Pancreas (tissue), 10 donors: ENCODE measurements at regions of chr7 and their contacts with region 1.

Region 1: GRCh38 chr7:64618785-64619456 is 47.0 kb upstream of the ZNF107 start:
- DNase-seq: peak in 1 of 6 donors; percentile 21
- ATAC-seq: peak in 2 of 4 donors; percentile 47 to 75
- H3K4me3 ChIP-seq: no peak overlapping the region
- H3K27ac ChIP-seq: no peak overlapping the region
- H3K4me1 ChIP-seq: no peaks in the 10 kb centered on the region
- H3K27me3 ChIP-seq: no peaks in the 10 kb centered on the region
- CTCF ChIP-seq: peak in 2 of 4 donors; percentile 21 to 44

Region 2: GRCh38 chr7:64174945-64175344 is 444.0 kb before region 1 on chr7:
- intact Hi-C with region 1: loop called in 1 of 3 experiments (anchors 5 kb)
- DNase-seq: no peak
- ATAC-seq: no peak
- H3K4me3 ChIP-seq: no peak overlapping the region
- H3K27ac ChIP-seq: no peak overlapping the region
- H3K4me1 ChIP-seq: no peaks in the 10 kb centered on the region
- H3K27me3 ChIP-seq: no peaks in the 10 kb centered on the region
- CTCF ChIP-seq: no peak

Region 3: GRCh38 chr7:64183126-64183742 is 435.7 kb before region 1 on chr7:
- intact Hi-C with region 1: loop called in 1 of 3 experiments (anchors 5 kb)
- DNase-seq: peak in 2 of 6 donors; percentile 64 to 69
- ATAC-seq: peak in 1 of 4 donors; percentile 41
- H3K4me3 ChIP-seq: no peak overlapping the region
- H3K27ac ChIP-seq: no peak overlapping the region
- H3K4me1 ChIP-seq: no peaks in the 10 kb centered on the region
- H3K27me3 ChIP-seq: no peaks in the 10 kb centered on the region
- CTCF ChIP-seq: peak; percentile 37 to 40 (median 39)

Region 4: GRCh38 chr7:64794171-64794844 is 175.4 kb after region 1 on chr7 and contains the start of gene ZNF138:
- intact Hi-C with region 1: no loop called
- DNase-seq: peak; percentile 92 to 97 (median 94)
- ATAC-seq: peak; percentile 100
- H3K4me3 ChIP-seq: peak within 1 kb of the TSS; percentile 52 to 88 (median 79)
- H3K27ac ChIP-seq: peak within 1 kb of the TSS; percentile 42 to 83 (median 76)
- H3K4me1 ChIP-seq: peaks cover 8 to 11% (median 8%) of the 10 kb centered on the region in 3 donors
- H3K27me3 ChIP-seq: no peaks in the 10 kb centered on the region
- CTCF ChIP-seq: no peak
- total RNA-seq, gene ZNF138: 3.0 to 4.5 (median 3.6) TPM